GM12878 (cell line): ENCODE measurements at regions of chr1 and their contacts with region 1.

Region 1: DNA sequence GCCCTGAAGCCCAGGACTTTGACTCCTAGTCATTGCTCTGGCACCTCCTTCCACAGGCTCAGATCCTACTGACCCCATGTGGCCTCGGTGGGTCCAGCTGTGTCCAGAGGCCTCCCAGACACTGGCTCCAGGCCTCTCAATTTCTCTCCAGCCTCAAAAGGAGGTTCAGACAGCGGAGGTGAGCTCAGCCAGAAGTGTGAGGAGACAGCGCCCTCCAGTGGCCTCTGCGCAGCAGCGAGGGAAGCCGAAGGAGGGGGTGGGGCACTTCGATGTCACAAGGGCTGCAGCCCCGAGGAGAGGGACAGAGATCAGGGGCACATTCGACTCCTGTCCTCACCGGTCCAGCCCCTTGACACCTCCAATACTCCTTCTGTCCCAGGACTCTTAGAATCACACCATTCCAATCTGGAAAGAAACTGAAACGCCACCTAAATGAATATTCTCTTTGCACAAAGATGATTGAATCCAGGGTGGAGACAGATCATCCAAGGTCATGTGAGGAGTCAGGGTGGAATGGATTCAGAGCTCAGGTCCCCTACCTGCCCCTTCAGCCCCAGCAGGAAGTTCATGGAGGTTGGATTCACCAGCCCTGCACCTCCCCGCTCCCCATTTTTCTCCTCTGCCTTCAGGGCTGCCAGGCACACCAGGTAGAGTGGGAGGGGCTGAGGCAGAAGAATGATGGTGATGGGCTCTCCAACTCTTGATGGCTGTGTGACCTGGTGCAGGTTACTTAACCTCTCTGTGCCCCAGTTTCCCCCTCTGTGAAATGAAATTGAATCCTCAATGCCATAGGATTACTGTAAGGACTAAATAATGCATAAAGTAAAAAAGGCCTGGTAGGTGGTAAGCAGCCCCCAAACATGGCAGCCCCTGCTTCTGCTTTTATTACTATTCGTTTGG is 34.8 kb upstream of the ZBTB40 start:
- DNase-seq: peak; percentile 19
- ATAC-seq: peak; percentile 90
- H3K4me3 ChIP-seq: no peak overlapping the region
- H3K27ac ChIP-seq: no peak overlapping the region
- H3K4me1 ChIP-seq: peaks cover 8% of the 10 kb centered on the region
- H3K27me3 ChIP-seq: peaks cover 0 to 1% of the 10 kb centered on the region in 2 experiments; a peak in 1 of 4 replicates
- CTCF ChIP-seq: peak; percentile 88 to 93 (median 92)
- EP300 ChIP-seq: no peak
- POLR2A ChIP-seq: no peak
- RAD21 ChIP-seq: peak; percentile 94

Region 2: GRCh38 chr1:22001409-22001808 is 415.4 kb before region 1 on chr1 and contains the start of gene CELA3A:
- CTCF ChIA-PET with region 1: no interaction called
- POLR2A ChIA-PET with region 1: no interaction called
- RAD21 ChIA-PET with region 1: no interaction called
- SMC1A ChIA-PET with region 1: no interaction called
- in situ Hi-C with region 1: loop called (anchors 10 kb)
- intact Hi-C with region 1: no loop called
- DNase-seq: no peak
- ATAC-seq: no peak
- H3K4me3 ChIP-seq: no peak within 1 kb of the TSS
- H3K27ac ChIP-seq: no peak within 1 kb of the TSS
- H3K4me1 ChIP-seq: no peaks in the 10 kb centered on the region
- H3K27me3 ChIP-seq: no peaks in the 10 kb centered on the region
- CTCF ChIP-seq: no peak
- EP300 ChIP-seq: no peak
- POLR2A ChIP-seq: no peak
- RAD21 ChIP-seq: no peak
- polyA plus RNA-seq, gene CELA3A: not detected

Region 3: DNA sequence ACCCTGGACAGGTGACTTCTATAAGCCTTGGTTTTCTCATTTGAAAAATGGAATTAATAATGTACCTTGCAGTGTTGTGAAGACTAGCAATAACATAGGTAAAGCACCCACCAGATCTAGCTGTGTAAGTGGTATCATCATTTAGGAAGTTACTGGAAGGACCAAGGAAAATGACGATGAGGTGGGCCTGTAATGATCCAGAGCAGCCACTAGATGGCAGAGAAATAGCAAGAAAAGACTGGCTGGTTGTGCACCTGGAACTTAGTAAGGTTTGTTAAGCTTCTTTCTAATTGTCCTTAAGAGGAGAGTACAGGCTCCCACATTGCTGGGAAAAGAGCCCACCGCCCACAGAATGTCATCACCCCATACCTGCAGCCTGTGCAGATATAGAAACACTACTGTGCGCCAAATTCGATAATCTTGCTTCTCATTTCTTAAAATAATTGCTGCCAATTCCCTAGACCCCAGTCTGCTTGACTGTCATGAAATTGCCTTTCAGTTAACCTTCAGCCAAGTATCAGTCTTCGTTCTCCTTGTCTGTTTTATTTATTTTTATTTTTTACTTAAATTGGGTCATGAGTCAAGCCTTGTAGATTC is 311.1 kb before region 1 on chr1:
- CTCF ChIA-PET with region 1: interaction called, 10 read pairs
- POLR2A ChIA-PET with region 1: no interaction called
- RAD21 ChIA-PET with region 1: interaction called, 12 read pairs
- SMC1A ChIA-PET with region 1: interaction called, 4 read pairs
- in situ Hi-C with region 1: no loop called
- intact Hi-C with region 1: loop called (anchors 1 kb)
- DNase-seq: no peak
- ATAC-seq: peak; percentile 82
- H3K4me3 ChIP-seq: no peak overlapping the region
- H3K27ac ChIP-seq: no peak overlapping the region
- H3K4me1 ChIP-seq: peaks cover 22% of the 10 kb centered on the region
- H3K27me3 ChIP-seq: no peaks in the 10 kb centered on the region
- CTCF ChIP-seq: peak; percentile 78 to 87 (median 79)
- EP300 ChIP-seq: no peak
- POLR2A ChIP-seq: no peak
- RAD21 ChIP-seq: peak; percentile 75

Region 4: GRCh38 chr1:22131875-22132486 is 284.8 kb before region 1 on chr1:
- CTCF ChIA-PET with region 1: interaction called, 56 read pairs
- POLR2A ChIA-PET with region 1: no interaction called
- RAD21 ChIA-PET with region 1: interaction called, 49 read pairs
- SMC1A ChIA-PET with region 1: interaction called, 8 read pairs
- in situ Hi-C with region 1: loop called (anchors 5 kb)
- intact Hi-C with region 1: loop called (anchors 1 kb)
- DNase-seq: no peak
- ATAC-seq: peak; percentile 95
- H3K4me3 ChIP-seq: no peak overlapping the region
- H3K27ac ChIP-seq: no peak overlapping the region
- H3K4me1 ChIP-seq: no peaks in the 10 kb centered on the region
- H3K27me3 ChIP-seq: no peaks in the 10 kb centered on the region
- CTCF ChIP-seq: peak; percentile 86 to 96 (median 94); a peak in 5 of 6 replicates
- EP300 ChIP-seq: no peak
- POLR2A ChIP-seq: no peak
- RAD21 ChIP-seq: peak; percentile 98

Region 5: GRCh38 chr1:22142315-22143064 is 274.3 kb before region 1 on chr1:
- CTCF ChIA-PET with region 1: interaction called, 28 read pairs
- POLR2A ChIA-PET with region 1: no interaction called
- RAD21 ChIA-PET with region 1: interaction called, 3 read pairs
- SMC1A ChIA-PET with region 1: no interaction called
- in situ Hi-C with region 1: no loop called
- intact Hi-C with region 1: no loop called
- DNase-seq: no peak
- ATAC-seq: peak; percentile 46
- H3K4me3 ChIP-seq: no peak overlapping the region
- H3K27ac ChIP-seq: no peak overlapping the region
- H3K4me1 ChIP-seq: no peaks in the 10 kb centered on the region
- H3K27me3 ChIP-seq: peaks cover 8 to 18% of the 10 kb centered on the region in 2 experiments
- CTCF ChIP-seq: no peak
- EP300 ChIP-seq: no peak
- POLR2A ChIP-seq: no peak
- RAD21 ChIP-seq: no peak

Region 6: GRCh38 chr1:22296701-22297591 is 119.9 kb before region 1 on chr1:
- CTCF ChIA-PET with region 1: no interaction called
- POLR2A ChIA-PET with region 1: no interaction called
- RAD21 ChIA-PET with region 1: no interaction called
- SMC1A ChIA-PET with region 1: no interaction called
- in situ Hi-C with region 1: no loop called
- intact Hi-C with region 1: no loop called
- DNase-seq: no peak
- ATAC-seq: no peak
- H3K4me3 ChIP-seq: no peak overlapping the region
- H3K27ac ChIP-seq: no peak overlapping the region
- H3K4me1 ChIP-seq: peaks cover 5% of the 10 kb centered on the region; the same call in 1 of the 2 replicates
- H3K27me3 ChIP-seq: peaks cover 2 to 14% of the 10 kb centered on the region in 2 experiments; a peak in 3 of 4 replicates
- CTCF ChIP-seq: no peak
- EP300 ChIP-seq: no peak
- POLR2A ChIP-seq: no peak
- RAD21 ChIP-seq: no peak

Region 7: DNA sequence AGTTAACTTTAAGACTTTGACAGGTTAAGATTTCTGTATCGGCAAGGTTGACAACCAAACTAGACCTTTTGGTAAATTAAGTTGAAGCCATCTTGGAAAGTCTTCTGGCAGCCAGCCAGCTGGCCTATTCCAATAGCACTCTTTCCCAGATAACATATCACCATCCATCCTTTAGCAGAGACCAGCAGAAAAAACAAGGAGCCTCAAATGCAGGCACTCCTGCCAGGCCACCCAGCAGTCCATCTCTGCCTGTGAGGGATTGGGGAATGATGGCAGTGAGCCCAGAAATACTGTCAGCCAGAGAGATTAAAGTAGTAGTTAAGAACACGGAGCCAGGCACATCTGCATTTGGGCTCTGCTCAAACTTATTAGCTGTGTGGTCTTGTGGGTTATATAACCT is 54.3 kb after region 1 on chr1:
- CTCF ChIA-PET with region 1: no interaction called
- POLR2A ChIA-PET with region 1: no interaction called
- RAD21 ChIA-PET with region 1: no interaction called
- SMC1A ChIA-PET with region 1: no interaction called
- in situ Hi-C with region 1: no loop called
- intact Hi-C with region 1: no loop called
- DNase-seq: no peak
- ATAC-seq: no peak
- H3K4me3 ChIP-seq: no peak overlapping the region
- H3K27ac ChIP-seq: no peak overlapping the region
- H3K4me1 ChIP-seq: no peaks in the 10 kb centered on the region
- H3K27me3 ChIP-seq: no peaks in the 10 kb centered on the region
- CTCF ChIP-seq: no peak
- EP300 ChIP-seq: no peak
- POLR2A ChIP-seq: no peak
- RAD21 ChIP-seq: no peak

Region 8: GRCh38 chr1:22641906-22642636 is 225.3 kb after region 1 on chr1:
- CTCF ChIA-PET with region 1: interaction called, 77 read pairs
- POLR2A ChIA-PET with region 1: no interaction called
- RAD21 ChIA-PET with region 1: interaction called, 4 read pairs
- SMC1A ChIA-PET with region 1: interaction called, 14 read pairs
- in situ Hi-C with region 1: loop called (anchors 5 kb)
- intact Hi-C with region 1: loop called (anchors 1 kb)
- DNase-seq: no peak
- ATAC-seq: peak; percentile 98
- H3K4me3 ChIP-seq: no peak overlapping the region
- H3K27ac ChIP-seq: no peak overlapping the region
- H3K4me1 ChIP-seq: no peaks in the 10 kb centered on the region
- H3K27me3 ChIP-seq: no peaks in the 10 kb centered on the region; a peak in 1 of 4 replicates
- CTCF ChIP-seq: peak; percentile 83 to 93 (median 89)
- EP300 ChIP-seq: no peak
- POLR2A ChIP-seq: no peak
- RAD21 ChIP-seq: peak; percentile 77